ENCODE measurements at regions of chr20 and their contacts with region 1.

Region 1: GRCh38 chr20:31723319-31724078 is 831 bp upstream of the BCL2L1 start:
- DNase-seq: peak; percentile 99
- ATAC-seq: peak; percentile 93
- H3K4me3 ChIP-seq: peak overlapping the region; percentile 84
- H3K27ac ChIP-seq: peak overlapping the region; percentile 99
- H3K4me1 ChIP-seq: peaks cover 19% of the 10 kb centered on the region
- H3K27me3 ChIP-seq: no peaks in the 10 kb centered on the region
- CTCF ChIP-seq: peak; percentile 92

Region 2: GRCh38 chr20:31661625-31662371 is 61.7 kb before region 1 on chr20:
- intact Hi-C with region 1: loop called (anchors 2 kb)
- DNase-seq: peak; percentile 89
- ATAC-seq: peak; percentile 90
- H3K4me3 ChIP-seq: peak overlapping the region; percentile 44
- H3K27ac ChIP-seq: peak overlapping the region; percentile 68
- H3K4me1 ChIP-seq: peaks cover 47% of the 10 kb centered on the region
- H3K27me3 ChIP-seq: no peaks in the 10 kb centered on the region
- CTCF ChIP-seq: peak; percentile 85

Measured in upper lobe of right lung (tissue), 1 donor.